PC-3 (cell line): ENCODE measurements at regions of chr22 and their contacts with region 1.

Region 1: DNA sequence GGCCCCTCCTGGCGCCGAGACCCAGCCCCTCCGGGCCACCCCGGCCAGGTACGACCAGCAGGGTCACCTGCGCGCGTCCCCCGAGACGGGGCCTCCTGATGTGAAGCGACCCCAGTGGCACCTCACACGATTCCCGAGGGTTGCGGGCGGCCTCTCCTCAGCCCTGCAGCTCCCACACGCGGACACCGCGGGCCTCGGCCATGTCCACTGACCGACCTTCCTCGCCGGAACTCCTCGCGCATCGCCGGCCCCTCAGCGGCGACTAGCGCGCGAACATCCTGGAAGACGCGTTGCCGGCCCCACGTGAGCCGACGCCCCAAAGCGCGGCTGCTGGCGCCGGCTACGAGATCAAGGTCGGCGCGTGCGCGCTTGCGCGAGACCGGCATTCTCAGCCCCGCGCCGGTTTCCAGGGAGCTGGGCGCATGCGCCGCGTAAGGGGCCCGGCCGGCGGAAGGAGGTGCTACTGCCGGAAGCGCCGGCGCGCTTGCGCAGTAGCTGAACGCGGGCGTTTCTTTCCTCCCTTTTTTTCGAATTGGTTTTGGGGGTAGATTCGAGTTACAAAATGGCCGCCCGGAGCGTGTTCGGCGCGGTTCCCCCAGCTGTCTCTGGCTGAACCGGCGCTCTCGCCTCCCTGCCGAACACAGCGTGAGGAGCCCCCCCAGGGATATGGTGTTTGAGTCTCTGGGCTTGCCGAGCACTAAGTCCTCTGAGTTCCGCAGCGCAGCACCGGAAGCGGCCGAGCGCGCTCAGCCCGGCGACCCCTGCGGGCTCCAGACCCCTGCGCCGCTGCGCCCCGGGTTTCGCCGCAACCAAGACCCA is at the start of gene NUP50:
- DNase-seq: peak; percentile 95
- ATAC-seq: peak; percentile 60
- H3K4me3 ChIP-seq: peak within 1 kb of the TSS; percentile 99
- H3K27ac ChIP-seq: peak within 1 kb of the TSS; percentile 99
- H3K4me1 ChIP-seq: peaks cover 28% of the 10 kb centered on the region
- H3K27me3 ChIP-seq: no peaks in the 10 kb centered on the region
- CTCF ChIP-seq: no peak
- total RNA-seq, gene NUP50: 65.0 and 69.9 TPM in 2 replicates

Region 2: DNA sequence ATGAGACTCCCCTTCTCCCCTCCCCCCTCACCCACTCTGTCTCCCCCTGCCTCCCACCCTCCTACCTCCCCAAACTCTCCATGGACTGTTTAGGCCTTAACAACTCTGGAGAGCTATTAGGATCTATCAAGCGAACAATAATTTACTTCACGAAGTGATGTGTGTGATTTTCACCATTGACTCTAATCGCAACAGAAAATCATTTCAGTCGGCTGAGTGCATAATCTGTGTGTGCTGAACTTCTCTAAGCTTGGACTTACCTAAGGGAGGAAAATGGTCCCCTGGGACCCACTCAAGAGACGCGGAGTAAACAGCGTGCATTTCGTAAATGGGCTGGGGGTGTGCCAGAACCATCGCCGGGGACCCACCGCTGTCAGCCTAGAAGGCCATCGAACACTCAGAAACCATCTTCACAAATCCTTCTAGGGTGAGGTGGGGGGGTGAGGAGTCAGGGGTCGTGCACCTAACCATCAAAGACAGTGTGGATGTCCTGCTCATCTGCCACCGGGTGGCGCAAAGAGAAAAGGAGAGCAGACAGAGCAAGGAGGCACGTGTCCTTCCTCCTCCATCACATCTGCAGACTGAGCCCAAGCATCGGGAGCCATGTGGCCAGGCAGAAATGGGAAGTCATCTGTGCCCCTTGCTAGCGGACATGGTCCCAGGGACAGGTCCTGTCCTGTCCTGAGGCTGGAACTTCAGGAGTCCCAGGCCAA is 62.0 kb before region 1 on chr22:
- CTCF ChIA-PET with region 1: no interaction called
- POLR2A ChIA-PET with region 1: no interaction called
- intact Hi-C with region 1: loop called (anchors 5 kb)
- DNase-seq: peak; percentile 68
- ATAC-seq: peak; percentile 86
- H3K4me3 ChIP-seq: no peak overlapping the region
- H3K27ac ChIP-seq: no peak overlapping the region
- H3K4me1 ChIP-seq: peaks cover 10% of the 10 kb centered on the region
- H3K27me3 ChIP-seq: no peaks in the 10 kb centered on the region
- CTCF ChIP-seq: peak; percentile 81

Region 3: DNA sequence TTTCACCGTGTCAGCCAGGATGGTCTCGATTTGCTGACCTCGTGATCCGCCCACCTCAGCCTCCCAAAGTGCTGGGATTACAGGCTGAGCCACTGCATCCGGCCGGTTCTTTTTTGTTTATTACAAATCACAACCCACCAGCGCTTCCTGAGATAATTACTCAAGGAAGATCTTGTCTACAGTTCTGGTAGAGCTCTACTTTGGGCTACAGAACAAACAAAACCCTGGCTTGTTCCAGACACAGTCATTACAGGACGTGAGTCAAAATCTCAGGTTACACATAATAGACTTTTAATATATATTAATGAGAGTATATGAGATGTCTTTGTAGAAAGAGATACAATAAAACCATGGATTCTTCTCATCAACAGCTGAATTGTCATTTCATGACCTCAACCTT is 42.7 kb before region 1 on chr22:
- CTCF ChIA-PET with region 1: no interaction called
- POLR2A ChIA-PET with region 1: interaction called, 16 read pairs
- intact Hi-C with region 1: no loop called
- DNase-seq: peak; percentile 74
- ATAC-seq: peak; percentile 98
- H3K4me3 ChIP-seq: peak overlapping the region; percentile 51; the same call in 1 of the 2 replicates
- H3K27ac ChIP-seq: peak overlapping the region; percentile 68
- H3K4me1 ChIP-seq: peaks cover 8% of the 10 kb centered on the region
- H3K27me3 ChIP-seq: no peaks in the 10 kb centered on the region
- CTCF ChIP-seq: no peak